ENCODE measurements at regions of chr21 and their contacts with region 1.

Region 1: DNA sequence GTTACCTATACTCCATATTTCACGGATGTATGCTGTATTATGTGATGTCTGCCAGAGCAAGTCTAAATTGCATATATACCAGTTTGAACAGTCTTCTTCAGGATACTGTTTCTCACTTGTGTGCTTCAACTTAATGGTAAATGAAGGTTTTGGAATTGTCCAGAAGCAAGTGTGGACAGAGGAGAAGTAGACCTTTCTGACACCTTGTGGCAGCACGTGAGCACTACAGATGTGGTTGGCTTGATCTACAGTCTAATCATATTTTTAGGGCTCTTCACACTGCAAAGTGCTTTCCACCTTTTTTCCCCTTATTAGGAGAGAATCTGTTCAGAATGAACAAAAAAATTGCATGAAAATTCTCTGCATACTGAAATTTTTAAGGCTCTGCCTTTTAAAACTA is 10.9 kb downstream of the MORC3 start:
- DNase-seq: peak in 2 of 3 donors; percentile 73 to 75
- H3K4me3 ChIP-seq: no peak overlapping the region
- H3K27ac ChIP-seq: no peak overlapping the region
- H3K4me1 ChIP-seq: peaks cover 0 to 17% (median 9%) of the 10 kb centered on the region in 4 experiments
- H3K27me3 ChIP-seq: no peaks in the 10 kb centered on the region

Region 2: DNA sequence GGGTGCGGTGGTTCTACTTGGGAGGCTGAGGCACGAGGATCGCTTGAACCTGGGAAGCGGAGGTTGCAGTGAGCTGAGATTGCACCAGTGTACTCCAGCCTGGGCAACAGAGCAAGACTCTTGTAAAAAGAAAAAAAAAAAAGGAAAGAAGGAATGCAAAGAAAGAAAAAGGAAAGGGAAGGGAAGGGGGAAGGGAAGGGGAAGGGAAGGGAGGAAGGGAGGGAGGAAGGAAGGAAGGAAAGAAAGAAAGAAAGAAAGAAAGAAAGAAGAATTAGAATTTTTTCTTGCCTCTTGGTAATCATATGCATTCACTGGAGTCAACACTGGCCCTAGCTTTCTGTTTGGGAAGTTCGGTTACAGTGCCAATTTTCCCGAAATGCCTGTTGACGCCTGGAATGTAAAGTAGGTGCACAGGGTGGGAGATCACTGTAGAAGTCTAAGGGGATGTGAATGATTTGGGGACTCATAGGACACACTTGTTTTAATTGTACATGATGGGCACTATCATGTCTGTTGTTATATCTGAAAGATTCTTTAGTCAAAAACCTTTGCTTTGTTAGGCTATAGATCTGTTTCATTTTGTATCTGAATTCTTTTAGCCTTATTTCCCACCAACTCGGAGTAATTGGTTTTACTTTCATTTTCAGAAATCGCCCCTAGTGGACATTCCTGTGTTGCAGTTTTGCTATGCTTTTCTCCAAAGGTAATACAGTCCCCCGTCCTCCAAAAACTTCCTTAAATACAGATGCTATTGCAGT is 70.7 kb before region 1 on chr21:
- CTCF ChIA-PET with region 1: interaction called, 12 read pairs
- POLR2A ChIA-PET with region 1: no interaction called
- DNase-seq: peak; percentile 78 to 90 (median 86)
- H3K4me3 ChIP-seq: peak overlapping the region in 6 of 7 experiments; percentile 58 to 89 (median 70)
- H3K27ac ChIP-seq: peak overlapping the region; percentile 65 to 89
- H3K4me1 ChIP-seq: peaks cover 0 to 8% (median 1%) of the 10 kb centered on the region in 4 experiments
- H3K27me3 ChIP-seq: no peaks in the 10 kb centered on the region

Region 3: DNA sequence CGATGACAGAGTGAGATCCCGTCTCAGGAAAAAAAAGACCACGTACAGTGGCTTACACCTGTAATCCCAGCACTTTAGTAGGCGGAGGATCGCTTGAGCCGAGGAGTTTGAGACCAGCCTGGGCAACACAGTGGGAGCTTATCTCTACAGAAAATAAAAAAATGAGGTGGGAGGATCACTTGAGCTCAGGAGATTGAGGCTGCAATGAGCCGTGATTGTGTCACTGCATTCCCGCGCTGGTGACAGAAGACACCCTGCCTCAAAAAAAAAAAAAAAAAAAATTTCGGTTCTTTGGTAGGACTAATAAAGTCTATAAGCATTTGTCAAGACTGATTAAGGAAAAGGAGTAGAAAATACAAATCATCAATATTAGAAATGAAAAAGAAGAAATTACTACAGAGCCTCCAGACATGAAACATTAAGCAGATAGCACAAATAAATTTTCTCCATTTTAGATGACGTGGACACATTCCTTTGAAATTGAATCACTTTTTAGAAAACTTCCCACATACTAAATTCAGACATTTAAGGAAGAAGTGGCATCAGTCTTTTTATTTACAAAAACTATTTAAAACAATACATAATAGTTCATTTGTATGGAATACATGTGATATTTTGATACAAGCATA is 19.5 kb after region 1 on chr21:
- CTCF ChIA-PET with region 1: no interaction called
- POLR2A ChIA-PET with region 1: no interaction called
- DNase-seq: no peak
- H3K4me3 ChIP-seq: no peak overlapping the region
- H3K27ac ChIP-seq: no peak overlapping the region
- H3K4me1 ChIP-seq: no peaks in the 10 kb centered on the region
- H3K27me3 ChIP-seq: no peaks in the 10 kb centered on the region

Region 4: GRCh38 chr21:36478207-36478701 is 147.3 kb after region 1 on chr21:
- CTCF ChIA-PET with region 1: no interaction called
- POLR2A ChIA-PET with region 1: no interaction called
- DNase-seq: no peak
- H3K4me3 ChIP-seq: no peak overlapping the region
- H3K27ac ChIP-seq: no peak overlapping the region
- H3K4me1 ChIP-seq: no peaks in the 10 kb centered on the region
- H3K27me3 ChIP-seq: no peaks in the 10 kb centered on the region